GM13976 (cell line): ENCODE measurements at regions of chrX and their contacts with region 1.

Region 1: GRCh38 chrX:151753313-151754041 is 18.9 kb downstream of the CNGA2 start:
- DNase-seq: peak; percentile 64
- CTCF ChIP-seq: peak; percentile 69

Region 2: GRCh38 chrX:152632445-152633097 is 879.1 kb after region 1 on chrX:
- in situ Hi-C with region 1: loop called (anchors 25 kb)
- DNase-seq: no peak
- CTCF ChIP-seq: peak; percentile 78

Region 3: GRCh38 chrX:152821145-152821765 is 1067.8 kb after region 1 on chrX:
- in situ Hi-C with region 1: loop called (anchors 25 kb)
- DNase-seq: no peak
- CTCF ChIP-seq: peak; percentile 38